ENCODE measurements at regions of chr1 and their contacts with region 1.

Region 1: DNA sequence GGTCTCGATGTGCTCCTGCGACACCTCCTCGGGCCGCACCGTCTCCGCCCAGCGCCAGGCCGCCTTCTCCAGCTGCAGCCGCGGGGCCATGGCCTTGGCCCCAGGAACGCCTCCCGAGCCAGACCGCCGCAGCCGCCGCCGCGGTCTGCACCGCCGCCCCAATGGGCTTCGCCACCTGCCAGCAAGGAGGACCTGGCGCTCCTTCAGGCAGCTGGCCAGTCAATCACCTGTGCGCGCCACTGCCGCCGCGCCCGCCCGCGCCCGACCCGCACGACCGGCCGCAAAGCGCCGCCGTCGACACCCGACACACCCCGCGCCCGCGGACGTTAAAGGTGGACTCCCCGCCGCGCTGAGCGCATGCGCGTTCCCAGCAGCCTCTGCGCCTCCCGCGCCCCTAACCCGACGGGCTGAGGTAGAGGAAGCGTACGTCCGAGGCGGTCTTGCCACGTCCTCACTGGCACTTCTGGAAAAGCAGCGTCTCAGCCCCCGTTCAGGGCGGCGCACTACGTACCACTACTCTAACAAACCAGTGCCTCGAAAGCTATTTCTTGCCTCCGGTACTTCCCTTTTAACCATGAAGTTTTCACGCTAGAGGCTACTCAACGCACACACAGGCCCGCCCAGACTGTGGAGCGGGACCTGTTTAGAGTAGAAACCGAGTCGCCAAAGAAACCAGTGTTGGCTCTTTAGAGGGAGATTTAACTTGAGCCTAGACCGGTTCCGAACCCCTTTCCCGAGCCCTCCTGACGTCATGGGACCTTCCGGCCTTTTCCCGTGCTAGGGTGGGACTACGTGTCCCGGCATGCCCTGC is at the start of gene USP48:
- DNase-seq: peak; percentile 87
- ATAC-seq: peak; percentile 78
- H3K4me3 ChIP-seq: peak within 1 kb of the TSS; percentile 73
- H3K27ac ChIP-seq: peak within 1 kb of the TSS; percentile 100
- H3K4me1 ChIP-seq: 0 out of 2 replicates have a peak, but pooled peaks cover 4% of the 10 kb centered on the region
- H3K27me3 ChIP-seq: no peaks in the 10 kb centered on the region
- CTCF ChIP-seq: no peak
- EP300 ChIP-seq: peak in 1 of 2 experiments; percentile 22; a peak in 1 of 4 replicates
- POLR2A ChIP-seq: peak; percentile 100
- RAD21 ChIP-seq: 0 out of 2 replicates have a peak, but pooled peaks have one; percentile 1
- polyA plus RNA-seq, gene USP48: 21.2 to 39.0 TPM

Region 2: GRCh38 chr1:21703318-21703963 is 79.6 kb before region 1 on chr1:
- CTCF ChIA-PET with region 1: interaction called, 18 read pairs
- POLR2A ChIA-PET with region 1: interaction called, 5 read pairs
- RAD21 ChIA-PET with region 1: interaction called, 15 read pairs
- SMC1A ChIA-PET with region 1: interaction called, 30 read pairs
- in situ Hi-C with region 1: no loop called
- intact Hi-C with region 1: loop called (anchors 5 kb)
- DNase-seq: no peak
- ATAC-seq: peak; percentile 68
- H3K4me3 ChIP-seq: no peak overlapping the region
- H3K27ac ChIP-seq: no peak overlapping the region
- H3K4me1 ChIP-seq: no peaks in the 10 kb centered on the region
- H3K27me3 ChIP-seq: no peaks in the 10 kb centered on the region
- CTCF ChIP-seq: peak; percentile 37 to 48 (median 37); a peak in 5 of 6 replicates
- EP300 ChIP-seq: no peak
- POLR2A ChIP-seq: no peak
- RAD21 ChIP-seq: peak; percentile 48

Region 3: GRCh38 chr1:21734526-21734925 is 48.5 kb before region 1 on chr1:
- CTCF ChIA-PET with region 1: interaction called, 5 read pairs
- POLR2A ChIA-PET with region 1: no interaction called
- RAD21 ChIA-PET with region 1: interaction called, 4 read pairs
- SMC1A ChIA-PET with region 1: interaction called, 13 read pairs
- in situ Hi-C with region 1: no loop called
- intact Hi-C with region 1: no loop called
- DNase-seq: no peak
- ATAC-seq: no peak
- H3K4me3 ChIP-seq: no peak overlapping the region
- H3K27ac ChIP-seq: no peak overlapping the region
- H3K4me1 ChIP-seq: no peaks in the 10 kb centered on the region
- H3K27me3 ChIP-seq: no peaks in the 10 kb centered on the region
- CTCF ChIP-seq: no peak
- EP300 ChIP-seq: no peak
- POLR2A ChIP-seq: no peak
- RAD21 ChIP-seq: no peak

Region 4: DNA sequence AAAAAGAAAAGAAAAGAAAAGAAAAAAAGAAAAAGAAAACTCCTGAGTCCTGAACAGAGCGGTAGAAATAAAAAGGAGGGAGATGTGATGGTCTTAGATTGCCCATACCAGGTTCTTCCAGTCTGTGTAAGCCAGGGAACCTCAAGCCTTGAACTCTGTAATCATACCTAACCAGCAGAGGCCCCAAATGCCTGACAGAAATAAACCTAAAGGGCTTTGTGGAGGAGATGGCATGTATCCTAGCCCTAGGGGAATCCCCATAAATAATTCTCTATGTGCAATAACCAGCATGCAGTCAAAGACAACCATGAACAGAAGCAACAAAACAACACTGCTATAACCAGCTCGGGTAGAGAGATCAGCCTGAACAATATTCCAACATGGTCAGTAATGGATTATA is 40.5 kb before region 1 on chr1:
- CTCF ChIA-PET with region 1: interaction called, 10 read pairs
- POLR2A ChIA-PET with region 1: interaction called, 3 read pairs
- RAD21 ChIA-PET with region 1: interaction called, 9 read pairs
- SMC1A ChIA-PET with region 1: interaction called, 9 read pairs
- in situ Hi-C with region 1: no loop called
- intact Hi-C with region 1: no loop called
- DNase-seq: no peak
- ATAC-seq: peak; percentile 72
- H3K4me3 ChIP-seq: no peak overlapping the region
- H3K27ac ChIP-seq: no peak overlapping the region
- H3K4me1 ChIP-seq: peaks cover 6% of the 10 kb centered on the region
- H3K27me3 ChIP-seq: no peaks in the 10 kb centered on the region
- CTCF ChIP-seq: no peak; a peak in 1 of 6 replicates
- EP300 ChIP-seq: no peak
- POLR2A ChIP-seq: no peak
- RAD21 ChIP-seq: peak; percentile 42

Region 5: DNA sequence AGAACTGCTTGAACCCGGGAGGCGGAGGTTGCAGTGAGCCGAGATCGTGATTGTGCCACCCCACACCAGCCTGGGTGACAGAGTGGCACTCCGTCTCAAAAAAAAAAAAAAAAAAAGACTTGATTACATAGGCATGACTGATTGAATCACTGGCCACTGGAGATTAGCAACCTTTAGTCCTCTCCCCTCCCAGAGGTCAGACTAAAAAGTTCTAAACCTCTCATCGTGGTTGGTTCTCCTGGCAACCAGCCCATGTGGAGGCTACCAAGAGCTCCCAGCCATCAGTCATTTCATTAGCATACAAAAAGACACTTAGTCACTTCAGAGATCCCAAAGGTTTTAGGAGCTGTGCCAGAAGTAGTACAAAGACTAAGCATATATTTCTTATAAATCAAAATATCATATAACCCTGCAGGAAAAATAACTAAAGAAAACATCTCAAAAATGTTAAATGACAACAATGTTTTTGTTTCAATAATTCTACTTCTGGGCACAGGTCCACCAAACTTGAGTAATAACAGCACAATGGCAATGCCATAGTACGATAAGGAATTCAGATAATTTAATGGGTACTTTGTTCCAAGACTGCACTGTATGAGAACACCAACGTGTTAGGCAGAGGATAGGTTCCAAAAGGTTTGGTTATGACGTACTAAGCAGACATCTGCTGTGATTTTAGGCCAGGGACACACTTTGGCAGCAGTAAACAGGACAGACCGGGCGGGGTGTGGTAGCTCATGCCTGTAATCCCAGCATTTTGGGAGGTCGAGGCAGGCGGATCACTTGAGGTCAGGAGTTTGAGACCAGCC is 18.3 kb before region 1 on chr1:
- CTCF ChIA-PET with region 1: interaction called, 50 read pairs
- POLR2A ChIA-PET with region 1: interaction called, 107 read pairs
- RAD21 ChIA-PET with region 1: interaction called, 100 read pairs
- SMC1A ChIA-PET with region 1: interaction called, 121 read pairs
- in situ Hi-C with region 1: no loop called
- intact Hi-C with region 1: loop called (anchors 1 kb)
- DNase-seq: no peak
- ATAC-seq: peak; percentile 40
- H3K4me3 ChIP-seq: peak overlapping the region; percentile 23; the same call in 1 of the 2 replicates
- H3K27ac ChIP-seq: peak overlapping the region; percentile 99
- H3K4me1 ChIP-seq: peaks cover 76% of the 10 kb centered on the region
- H3K27me3 ChIP-seq: no peaks in the 10 kb centered on the region
- CTCF ChIP-seq: no peak
- EP300 ChIP-seq: no peak
- POLR2A ChIP-seq: no peak
- RAD21 ChIP-seq: no peak

Region 6: DNA sequence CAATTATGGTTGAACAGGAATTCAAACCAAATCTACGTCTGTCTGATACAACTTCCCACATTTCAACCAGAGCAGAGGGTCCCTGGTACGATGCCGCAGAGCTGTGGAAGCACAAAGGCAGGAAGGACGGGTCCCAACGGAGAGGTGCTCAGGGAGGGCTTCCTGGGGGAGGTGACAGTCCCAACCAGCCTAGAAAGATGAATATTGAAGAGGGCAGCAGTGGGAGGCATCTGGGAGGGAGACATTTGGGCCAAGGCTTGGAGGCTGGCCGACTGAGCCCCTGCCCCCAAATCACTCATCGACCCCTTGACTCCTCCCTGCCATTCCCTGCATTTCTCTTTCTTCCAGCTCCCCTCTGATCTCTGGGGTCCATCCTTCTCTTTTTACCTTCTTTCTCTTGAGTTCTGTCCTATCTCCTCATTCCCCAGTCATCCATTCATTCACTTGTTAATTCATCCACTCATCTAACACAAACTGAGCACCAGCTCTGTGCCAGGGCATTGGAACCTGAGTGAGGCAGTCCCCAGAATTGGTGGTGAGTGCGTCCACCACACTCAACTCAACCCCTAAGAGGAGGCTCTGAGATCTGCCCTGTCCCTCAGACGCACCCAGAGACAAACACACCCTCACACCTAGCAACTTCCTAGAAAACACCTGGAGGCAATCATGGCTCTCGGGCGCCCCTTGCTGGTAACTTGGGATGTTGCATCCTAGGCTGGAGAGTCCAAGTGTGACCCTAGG is 180.6 kb after region 1 on chr1:
- CTCF ChIA-PET with region 1: interaction called, 3 read pairs
- POLR2A ChIA-PET with region 1: interaction called, 3 read pairs
- RAD21 ChIA-PET with region 1: interaction called, 4 read pairs
- SMC1A ChIA-PET with region 1: no interaction called
- in situ Hi-C with region 1: no loop called
- intact Hi-C with region 1: loop called (anchors 10 kb)
- DNase-seq: peak; percentile 26
- ATAC-seq: peak; percentile 98
- H3K4me3 ChIP-seq: no peak overlapping the region
- H3K27ac ChIP-seq: no peak overlapping the region
- H3K4me1 ChIP-seq: no peaks in the 10 kb centered on the region
- H3K27me3 ChIP-seq: no peaks in the 10 kb centered on the region
- CTCF ChIP-seq: peak; percentile 84 to 89 (median 87)
- EP300 ChIP-seq: no peak
- POLR2A ChIP-seq: no peak
- RAD21 ChIP-seq: peak; percentile 93

Region 7: DNA sequence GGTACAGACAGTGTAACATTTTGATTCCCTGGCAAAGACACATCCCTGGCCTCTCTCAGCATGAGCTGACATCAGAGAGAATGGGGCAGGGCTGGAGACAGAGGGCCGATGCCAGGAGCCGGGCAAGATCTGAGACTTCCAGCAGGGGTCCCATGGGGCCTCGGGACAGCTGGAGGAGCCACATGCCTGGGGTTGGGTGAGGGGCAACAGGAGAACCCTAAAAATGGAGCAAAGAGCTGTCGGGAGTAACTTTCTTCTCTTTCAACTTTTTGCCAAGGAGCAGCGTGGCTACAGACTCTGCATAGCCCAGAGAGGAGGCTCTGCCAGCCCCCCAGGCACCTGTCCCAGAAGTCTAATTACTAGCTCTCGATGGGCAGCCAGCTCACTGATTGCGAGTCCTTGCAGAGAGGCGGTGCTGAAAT is 1058.8 kb after region 1 on chr1:
- CTCF ChIA-PET with region 1: no interaction called
- POLR2A ChIA-PET with region 1: no interaction called
- RAD21 ChIA-PET with region 1: no interaction called
- SMC1A ChIA-PET with region 1: no interaction called
- in situ Hi-C with region 1: no loop called
- intact Hi-C with region 1: no loop called
- DNase-seq: no peak
- ATAC-seq: no peak
- H3K4me3 ChIP-seq: no peak overlapping the region
- H3K27ac ChIP-seq: no peak overlapping the region
- H3K4me1 ChIP-seq: peaks cover 5% of the 10 kb centered on the region
- H3K27me3 ChIP-seq: peaks cover 0 to 3% of the 10 kb centered on the region in 2 experiments; a peak in 2 of 4 replicates
- CTCF ChIP-seq: no peak
- EP300 ChIP-seq: no peak
- POLR2A ChIP-seq: no peak
- RAD21 ChIP-seq: no peak